Activated CD4-positive, alpha-beta T cell treated with anti-CD3 and anti-CD28 coated beads for 36 hours (primary cell): ENCODE measurements at regions of chr18 and their contacts with region 1.

Region 1: DNA sequence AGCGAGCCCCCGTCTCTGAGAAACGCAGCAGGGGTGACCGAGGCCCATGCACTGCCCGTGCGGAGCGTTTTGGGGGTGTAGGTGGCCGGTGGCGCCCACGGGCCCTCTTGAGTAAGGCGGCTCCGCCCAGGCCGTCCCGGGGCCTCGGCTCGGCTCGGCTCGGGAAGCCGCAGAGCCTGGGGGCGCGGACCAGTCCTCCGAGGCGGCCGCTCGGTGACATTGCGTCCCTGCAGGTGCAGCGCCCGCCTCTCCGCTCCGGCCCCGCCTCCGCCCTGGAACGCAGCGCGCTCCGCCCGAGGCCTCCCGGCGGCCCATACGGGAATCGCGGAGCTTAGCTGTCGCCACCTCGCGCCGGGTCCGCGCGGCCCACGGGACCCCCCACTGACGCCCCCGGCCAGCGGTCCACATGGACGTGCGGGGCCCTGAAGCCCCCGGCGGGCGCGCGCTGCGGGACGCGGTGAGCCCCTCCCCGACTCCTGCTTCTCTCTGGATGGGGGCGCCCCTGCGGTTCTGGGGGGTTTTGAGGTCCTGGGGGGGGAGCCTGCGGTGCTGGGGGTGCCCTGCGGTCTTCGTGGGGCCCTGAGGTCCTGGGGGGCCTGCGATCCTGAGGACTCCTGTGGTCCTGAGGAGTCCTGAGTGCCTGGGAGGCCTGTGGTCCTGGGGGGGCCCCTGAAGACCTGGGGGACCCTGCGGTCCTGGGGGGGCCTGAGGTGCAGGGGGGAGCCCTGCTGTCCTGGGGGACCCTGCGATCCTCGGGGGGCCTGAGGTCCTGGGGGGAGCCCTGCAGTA is at the start of gene HSBP1L1:
- DNase-seq: peak; percentile 83
- ATAC-seq: peak; percentile 79
- H3K4me3 Mint-ChIP-seq: peak within 1 kb of the TSS; percentile 71
- H3K27ac Mint-ChIP-seq: peak within 1 kb of the TSS; percentile 80
- H3K4me1 Mint-ChIP-seq: peaks cover 41% of the 10 kb centered on the region
- H3K27me3 Mint-ChIP-seq: peaks cover 2% of the 10 kb centered on the region
- total RNA-seq, gene HSBP1L1: 14.4 to 16.9 TPM

Region 2: DNA sequence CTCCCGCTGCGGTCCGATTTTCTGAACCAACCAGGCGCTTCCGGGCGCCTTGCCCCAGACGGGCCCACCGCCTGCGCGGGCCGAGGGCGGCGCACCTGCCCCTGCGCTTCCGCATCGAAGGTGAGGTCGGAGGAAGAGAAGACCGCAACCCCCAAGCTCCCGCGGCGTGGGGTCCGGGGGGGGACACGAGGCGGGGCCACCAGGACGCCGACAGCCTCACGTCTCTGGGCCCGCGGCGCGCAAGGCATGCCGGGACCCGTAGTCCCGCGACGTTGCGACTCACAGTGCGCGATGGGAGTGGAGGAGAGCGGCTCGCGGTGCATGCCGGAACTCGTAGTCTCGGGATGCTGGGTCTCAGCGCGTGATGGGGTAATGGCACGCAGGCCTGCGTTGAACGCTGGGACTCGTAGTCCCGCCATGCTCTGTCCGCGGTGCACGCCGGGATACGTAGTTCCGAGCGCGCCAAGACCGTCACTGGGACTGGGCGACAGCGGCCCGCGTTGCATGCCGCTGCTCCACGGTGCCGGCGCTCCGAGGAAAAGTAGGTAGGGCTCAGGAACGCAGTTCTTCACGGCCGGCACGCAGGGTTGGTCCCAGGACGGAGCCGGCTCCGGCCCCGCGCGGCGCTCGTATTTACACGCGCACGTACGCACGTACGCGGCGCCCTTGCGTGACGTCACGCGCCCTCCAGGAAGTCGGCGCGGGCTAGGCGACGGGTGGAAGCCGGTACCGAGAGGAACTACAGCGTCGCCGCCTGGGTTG is 285.2 kb before region 1 on chr18 and contains the start of gene CTDP1:
- CTCF ChIA-PET with region 1: no interaction called
- POLR2A ChIA-PET with region 1: interaction called, 4 read pairs
- intact Hi-C with region 1: loop called (anchors 1 to 2 kb)
- DNase-seq: peak; percentile 99
- ATAC-seq: peak; percentile 91
- H3K4me3 Mint-ChIP-seq: peak within 1 kb of the TSS; percentile 90
- H3K27ac Mint-ChIP-seq: peak within 1 kb of the TSS; percentile 97
- H3K4me1 Mint-ChIP-seq: peaks cover 65% of the 10 kb centered on the region
- H3K27me3 Mint-ChIP-seq: no peaks in the 10 kb centered on the region
- total RNA-seq, gene CTDP1: 36.7 to 45.5 TPM

Region 3: GRCh38 chr18:79797518-79798345 is 166.8 kb before region 1 on chr18 and contains the start of gene KCNG2:
- CTCF ChIA-PET with region 1: no interaction called
- POLR2A ChIA-PET with region 1: no interaction called
- intact Hi-C with region 1: loop called in 1 of 2 experiments (anchors 5 kb)
- DNase-seq: peak; percentile 67
- ATAC-seq: peak; percentile 83
- H3K4me3 Mint-ChIP-seq: peak within 1 kb of the TSS; percentile 56
- H3K27ac Mint-ChIP-seq: no peak within 1 kb of the TSS
- H3K4me1 Mint-ChIP-seq: peaks cover 11% of the 10 kb centered on the region
- H3K27me3 Mint-ChIP-seq: peaks cover 31% of the 10 kb centered on the region
- total RNA-seq, gene KCNG2: not detected

Region 4: GRCh38 chr18:79951578-79952455 is 12.7 kb before region 1 on chr18 and contains the start of gene SLC66A2:
- CTCF ChIA-PET with region 1: interaction called, 3 read pairs
- POLR2A ChIA-PET with region 1: interaction called, 3 read pairs
- intact Hi-C with region 1: loop called in 1 of 2 experiments (anchors 1 kb)
- DNase-seq: peak; percentile 97
- ATAC-seq: peak; percentile 87
- H3K4me3 Mint-ChIP-seq: peak within 1 kb of the TSS; percentile 82
- H3K27ac Mint-ChIP-seq: peak within 1 kb of the TSS; percentile 81
- H3K4me1 Mint-ChIP-seq: peaks cover 39% of the 10 kb centered on the region
- H3K27me3 Mint-ChIP-seq: no peaks in the 10 kb centered on the region
- total RNA-seq, gene SLC66A2: 23.4 to 28.5 TPM

Region 5: GRCh38 chr18:79988451-79989194 is 24.1 kb after region 1 on chr18 and contains the start of gene TXNL4A:
- CTCF ChIA-PET with region 1: interaction called, 4 read pairs
- POLR2A ChIA-PET with region 1: interaction called, 4 read pairs
- intact Hi-C with region 1: loop called in 1 of 2 experiments (anchors 1 kb)
- DNase-seq: peak; percentile 92
- ATAC-seq: peak; percentile 98
- H3K4me3 Mint-ChIP-seq: peak within 1 kb of the TSS; percentile 92
- H3K27ac Mint-ChIP-seq: peak within 1 kb of the TSS; percentile 98
- H3K4me1 Mint-ChIP-seq: peaks cover 31% of the 10 kb centered on the region
- H3K27me3 Mint-ChIP-seq: no peaks in the 10 kb centered on the region
- total RNA-seq, gene TXNL4A: 150 to 194 TPM

Region 6: DNA sequence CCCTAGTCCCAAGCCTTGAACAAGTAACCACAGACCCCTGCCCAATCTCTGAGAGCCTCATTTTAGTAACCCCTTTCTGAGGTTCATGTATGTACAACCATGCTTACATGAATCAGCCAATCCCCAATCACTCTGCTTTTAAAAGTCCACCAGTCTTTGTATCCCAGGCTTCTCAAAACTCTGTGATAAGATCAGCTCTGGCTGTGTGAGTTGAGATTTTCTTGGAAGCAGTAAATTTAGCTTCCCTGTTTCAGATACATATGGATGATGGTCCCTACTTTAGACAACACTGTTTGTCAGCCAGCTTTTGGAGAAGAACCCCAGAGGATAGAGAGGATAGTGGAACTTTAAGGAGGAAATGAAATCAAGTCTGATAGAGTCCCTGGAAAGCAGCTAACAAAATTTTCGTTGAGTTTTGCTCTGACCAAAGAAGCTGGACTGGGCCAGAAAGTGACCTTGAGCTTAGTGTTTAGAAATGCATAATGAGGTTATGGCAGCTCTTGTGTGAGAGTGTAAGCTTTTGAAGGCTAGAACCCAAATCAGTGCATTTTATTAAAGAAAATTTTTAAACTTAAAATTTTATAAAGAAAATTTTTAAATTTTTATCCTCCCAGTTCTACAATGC is 148.2 kb after region 1 on chr18:
- CTCF ChIA-PET with region 1: no interaction called
- POLR2A ChIA-PET with region 1: no interaction called
- intact Hi-C with region 1: no loop called
- DNase-seq: no peak
- ATAC-seq: no peak
- H3K4me3 Mint-ChIP-seq: no peak overlapping the region
- H3K27ac Mint-ChIP-seq: no peak overlapping the region
- H3K4me1 Mint-ChIP-seq: peaks cover 42% of the 10 kb centered on the region
- H3K27me3 Mint-ChIP-seq: no peaks in the 10 kb centered on the region

Region 7: DNA sequence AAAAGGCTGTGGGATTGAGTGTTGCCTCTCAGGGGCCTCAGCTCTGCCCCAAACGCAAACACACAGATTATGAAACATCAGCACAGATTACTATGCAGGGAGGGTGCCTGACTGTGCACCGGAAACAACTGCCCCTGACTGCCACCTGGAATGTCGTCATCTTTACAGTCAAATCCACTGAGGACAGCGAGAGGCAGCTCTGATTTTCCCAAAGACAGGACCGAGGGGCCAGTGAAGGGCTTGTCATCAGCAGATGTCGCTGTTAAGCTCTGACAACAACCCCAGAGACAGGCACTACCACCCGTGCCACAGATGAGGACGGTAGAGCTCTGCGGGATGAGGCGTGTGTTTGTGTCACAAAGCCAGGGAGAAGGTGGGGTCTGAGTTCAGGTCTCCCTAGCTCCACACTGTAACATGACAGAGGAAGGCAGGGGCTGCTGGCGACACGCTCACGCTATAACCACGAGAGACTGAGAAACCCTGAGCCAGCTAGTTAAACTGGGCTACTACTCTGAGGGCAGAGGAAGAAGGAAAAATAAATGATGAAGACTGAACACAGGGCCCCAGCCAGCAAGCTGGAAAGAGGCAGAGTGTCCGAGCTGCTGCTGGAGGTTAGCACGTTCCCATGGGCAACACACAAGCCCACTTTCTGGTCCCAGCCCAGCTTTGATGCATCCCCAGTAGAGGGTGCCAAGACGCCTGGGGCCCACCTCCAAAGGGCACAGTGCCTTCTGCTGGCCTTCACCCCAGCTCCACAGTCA is 235.8 kb after region 1 on chr18:
- CTCF ChIA-PET with region 1: no interaction called
- POLR2A ChIA-PET with region 1: no interaction called
- intact Hi-C with region 1: loop called in 1 of 2 experiments (anchors 2 kb)
- DNase-seq: no peak
- ATAC-seq: no peak
- H3K4me3 Mint-ChIP-seq: no peak overlapping the region
- H3K27ac Mint-ChIP-seq: no peak overlapping the region
- H3K4me1 Mint-ChIP-seq: peaks cover 17% of the 10 kb centered on the region
- H3K27me3 Mint-ChIP-seq: peaks cover 51% of the 10 kb centered on the region